Common myeloid progenitor, CD34-positive (primary cell): ENCODE measurements at regions of chr2 and their contacts with region 1.

Region 1: GRCh38 chr2:225660262-225661131 is 261.0 kb downstream of the NYAP2 start:
- DNase-seq: peak; percentile 59 to 78 (median 71)
- H3K4me3 ChIP-seq: no peak overlapping the region
- H3K27ac ChIP-seq: no peak overlapping the region
- H3K4me1 ChIP-seq: no peaks in the 10 kb centered on the region
- H3K27me3 ChIP-seq: peaks cover 0 to 1% (median 0%) of the 10 kb centered on the region in 5 experiments

Region 2: GRCh38 chr2:225122583-225123486 is 537.7 kb before region 1 on chr2:
- CTCF ChIA-PET with region 1: interaction called, 19 read pairs
- POLR2A ChIA-PET with region 1: no interaction called
- DNase-seq: peak; percentile 11 to 45 (median 35)
- H3K4me3 ChIP-seq: no peak overlapping the region
- H3K27ac ChIP-seq: no peak overlapping the region
- H3K4me1 ChIP-seq: peaks cover 0 to 3% (median 1%) of the 10 kb centered on the region in 4 experiments
- H3K27me3 ChIP-seq: no peaks in the 10 kb centered on the region

Region 3: DNA sequence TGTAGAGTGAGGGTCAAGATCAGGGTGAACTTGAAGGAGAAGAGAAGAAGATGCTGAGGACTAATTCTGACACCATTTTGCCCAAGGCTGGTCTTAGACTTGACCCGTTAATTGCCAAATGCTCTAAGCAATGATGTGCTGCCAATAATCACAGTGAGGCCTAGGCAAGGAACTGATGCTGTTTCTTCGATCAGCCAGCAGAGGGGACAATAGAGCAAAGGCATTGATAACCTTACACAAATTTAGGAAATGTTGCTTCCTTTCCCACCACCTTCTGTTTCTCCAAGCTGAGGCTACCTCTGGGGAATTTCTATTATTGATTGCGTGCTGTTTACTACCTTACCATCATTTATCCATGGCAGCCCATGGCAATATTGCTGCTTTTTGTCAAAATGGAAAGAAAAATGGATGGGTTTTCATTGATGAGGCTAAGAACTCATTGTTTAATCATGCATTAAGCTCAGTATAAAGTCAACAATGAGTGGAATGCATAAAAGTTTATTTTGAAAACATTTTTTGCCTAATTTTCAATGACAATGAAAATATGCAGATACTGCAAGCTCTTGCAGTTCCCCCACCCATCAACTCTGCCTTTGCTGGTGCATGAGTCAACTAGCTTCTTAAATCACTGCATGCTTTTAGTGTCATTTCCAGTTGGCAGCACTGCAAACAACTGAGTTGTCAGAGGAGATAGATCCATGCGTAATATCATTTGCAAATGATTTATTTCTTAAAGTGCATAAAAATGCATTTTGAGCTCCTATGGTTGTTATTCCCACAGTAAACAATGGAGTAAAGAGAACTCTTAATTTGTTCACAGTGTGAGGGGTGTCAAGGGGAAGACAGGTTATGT is 377.4 kb before region 1 on chr2:
- CTCF ChIA-PET with region 1: interaction called, 21 read pairs
- POLR2A ChIA-PET with region 1: no interaction called
- DNase-seq: peak; percentile 12 to 40 (median 34)
- H3K4me3 ChIP-seq: no peak overlapping the region
- H3K27ac ChIP-seq: no peak overlapping the region
- H3K4me1 ChIP-seq: no peaks in the 10 kb centered on the region
- H3K27me3 ChIP-seq: peaks cover 0 to 4% (median 0%) of the 10 kb centered on the region in 5 experiments

Region 4: DNA sequence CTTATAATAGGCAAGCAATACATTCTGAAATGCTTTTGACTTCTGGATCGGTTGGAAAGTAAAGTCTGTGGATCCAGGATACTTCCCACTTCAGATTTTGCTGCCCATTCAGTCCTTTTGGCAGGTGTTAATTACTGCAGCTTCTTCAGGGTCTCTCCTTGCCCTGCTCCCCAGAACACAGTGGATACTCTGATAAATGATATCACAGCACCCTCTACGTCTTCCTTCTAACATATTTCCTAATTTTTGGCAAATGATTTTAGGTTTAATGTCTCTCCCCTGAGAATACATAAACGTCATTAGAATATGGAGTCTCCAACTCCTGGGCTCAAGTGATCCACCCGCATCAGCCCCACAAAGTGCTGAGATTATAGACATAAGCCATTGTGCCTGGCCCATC is 11.2 kb before region 1 on chr2:
- CTCF ChIA-PET with region 1: interaction called, 22 read pairs
- POLR2A ChIA-PET with region 1: no interaction called
- DNase-seq: no peak
- H3K4me3 ChIP-seq: no peak overlapping the region
- H3K27ac ChIP-seq: no peak overlapping the region
- H3K4me1 ChIP-seq: no peaks in the 10 kb centered on the region
- H3K27me3 ChIP-seq: no peaks in the 10 kb centered on the region